ENCODE measurements at regions of chr9 and their contacts with region 1.

Region 1: GRCh38 chr9:72022841-72023240 is 37.6 kb downstream of the C9orf57 start:
- DNase-seq: no peak
- H3K4me3 ChIP-seq: no peak overlapping the region
- H3K27ac ChIP-seq: no peak overlapping the region
- H3K4me1 ChIP-seq: peaks cover 0 to 2% of the 10 kb centered on the region in 2 experiments; a peak in 1 of 4 replicates
- H3K27me3 ChIP-seq: no peaks in the 10 kb centered on the region; the same call in 1 of the 2 replicates
- CTCF ChIP-seq: no peak
- EP300 ChIP-seq: no peak
- RAD21 ChIP-seq: no peak

Region 2: DNA sequence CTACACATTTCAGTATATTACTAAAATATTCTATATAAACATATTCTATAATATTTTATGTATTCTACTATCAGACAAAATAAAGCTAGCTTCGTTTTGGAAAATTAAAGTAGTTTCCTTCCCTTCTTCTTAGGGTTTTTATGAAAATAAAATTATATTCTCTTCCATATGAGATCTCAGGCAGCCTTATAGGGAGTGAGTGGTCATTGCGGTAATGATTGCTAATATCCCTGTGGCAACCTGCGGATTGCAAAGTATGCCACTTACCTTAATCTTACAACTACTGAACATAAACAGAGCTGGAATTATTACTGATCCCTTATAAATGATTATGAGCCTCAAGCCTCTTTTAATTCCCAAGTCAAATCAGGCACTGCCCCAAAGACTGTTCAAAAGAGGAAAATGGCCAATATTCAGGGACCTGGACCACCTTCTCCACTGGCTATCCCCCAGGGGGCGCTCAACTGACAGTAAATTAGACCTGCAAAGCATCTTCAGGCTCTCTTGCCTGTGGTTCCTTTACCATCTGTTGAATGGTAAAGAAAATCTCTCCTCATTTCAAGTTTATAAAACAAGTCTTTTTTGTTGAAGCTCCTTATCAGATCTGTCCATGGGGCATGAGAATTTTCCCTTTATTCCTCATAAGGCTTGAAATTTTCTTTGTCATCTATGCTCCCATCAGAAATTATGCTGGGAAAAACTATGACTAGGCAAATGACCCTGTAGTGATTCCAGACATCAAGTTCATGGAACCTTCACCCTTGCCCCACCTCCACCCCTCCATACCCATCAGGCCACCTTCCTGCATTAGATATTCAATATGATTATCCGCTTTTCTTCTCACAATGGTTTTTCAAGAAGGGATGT is 418.4 kb before region 1 on chr9:
- CTCF ChIA-PET with region 1: interaction called, 17 read pairs
- POLR2A ChIA-PET with region 1: no interaction called
- DNase-seq: peak; percentile 33
- H3K4me3 ChIP-seq: peak overlapping the region in 1 of 2 experiments; percentile 33; a peak in 1 of 4 replicates
- H3K27ac ChIP-seq: no peak overlapping the region
- H3K4me1 ChIP-seq: no peaks in the 10 kb centered on the region
- H3K27me3 ChIP-seq: peaks cover 7% of the 10 kb centered on the region; the same call in 1 of the 2 replicates
- CTCF ChIP-seq: peak; percentile 86
- EP300 ChIP-seq: no peak
- RAD21 ChIP-seq: peak; percentile 67

Region 3: GRCh38 chr9:71806901-71807307 is 215.9 kb before region 1 on chr9:
- CTCF ChIA-PET with region 1: interaction called, 149 read pairs
- POLR2A ChIA-PET with region 1: no interaction called
- DNase-seq: peak; percentile 54
- H3K4me3 ChIP-seq: peak overlapping the region in 1 of 2 experiments; percentile 38; a peak in 1 of 4 replicates
- H3K27ac ChIP-seq: no peak overlapping the region
- H3K4me1 ChIP-seq: no peaks in the 10 kb centered on the region
- H3K27me3 ChIP-seq: peaks cover 32% of the 10 kb centered on the region; the same call in 1 of the 2 replicates
- CTCF ChIP-seq: peak; percentile 84
- EP300 ChIP-seq: no peak
- RAD21 ChIP-seq: peak; percentile 87

Region 4: GRCh38 chr9:71819115-71819739 is 203.6 kb before region 1 on chr9:
- CTCF ChIA-PET with region 1: interaction called, 39 read pairs
- POLR2A ChIA-PET with region 1: no interaction called
- DNase-seq: peak; percentile 13
- H3K4me3 ChIP-seq: no peak overlapping the region
- H3K27ac ChIP-seq: no peak overlapping the region
- H3K4me1 ChIP-seq: no peaks in the 10 kb centered on the region; a peak in 1 of 4 replicates
- H3K27me3 ChIP-seq: no peaks in the 10 kb centered on the region
- CTCF ChIP-seq: peak; percentile 93
- EP300 ChIP-seq: no peak
- RAD21 ChIP-seq: peak; percentile 60

Region 5: DNA sequence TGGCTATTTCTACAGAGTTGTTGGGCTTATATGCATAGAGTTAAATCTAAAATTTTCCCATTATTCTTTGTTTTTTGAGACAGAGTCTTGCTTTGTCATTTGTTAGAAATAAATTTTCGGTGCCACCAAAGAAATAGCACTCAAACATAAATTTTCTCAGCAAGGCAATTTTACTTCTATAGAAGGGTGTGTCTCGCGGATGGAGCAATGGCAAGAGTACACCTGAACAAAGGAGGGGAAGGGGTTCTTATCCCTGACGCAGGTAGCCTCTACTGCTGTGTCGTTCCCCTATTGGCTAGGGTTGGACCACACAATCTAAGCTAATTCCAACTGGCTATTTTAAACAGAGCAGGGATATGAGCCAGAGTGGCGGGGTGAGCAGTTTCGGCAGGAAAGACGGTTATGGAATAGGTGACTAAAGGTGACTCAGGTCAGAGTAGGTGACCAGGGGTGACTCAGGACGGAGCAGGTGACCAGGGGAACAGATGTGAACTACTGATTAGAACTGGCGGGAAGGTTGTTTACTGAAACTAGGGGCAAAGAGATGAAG is 54.2 kb before region 1 on chr9:
- CTCF ChIA-PET with region 1: no interaction called
- POLR2A ChIA-PET with region 1: no interaction called
- DNase-seq: no peak
- H3K4me3 ChIP-seq: no peak overlapping the region
- H3K27ac ChIP-seq: no peak overlapping the region
- H3K4me1 ChIP-seq: no peaks in the 10 kb centered on the region
- H3K27me3 ChIP-seq: no peaks in the 10 kb centered on the region
- CTCF ChIP-seq: no peak
- EP300 ChIP-seq: no peak
- RAD21 ChIP-seq: no peak

Region 6: DNA sequence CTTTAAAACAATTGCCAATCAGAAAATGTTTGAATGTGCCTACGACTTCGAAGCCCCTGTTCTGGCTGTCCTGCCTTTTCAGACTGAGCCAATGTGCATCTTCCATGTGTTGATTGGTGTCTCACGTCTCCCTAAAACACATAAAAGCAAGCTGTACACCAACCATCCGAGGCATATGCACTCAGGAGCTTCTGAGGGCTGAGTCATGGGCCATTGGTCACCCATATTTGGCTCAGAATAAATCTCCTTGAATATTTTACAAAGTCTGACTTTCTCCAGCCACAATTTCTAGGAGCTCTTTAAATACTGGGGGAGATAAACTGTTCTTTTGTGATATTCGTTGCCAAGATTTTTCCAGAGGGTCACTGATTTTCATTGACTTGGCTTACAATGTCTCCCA is 16.3 kb before region 1 on chr9:
- CTCF ChIA-PET with region 1: interaction called, 12 read pairs
- POLR2A ChIA-PET with region 1: interaction called, 3 read pairs
- DNase-seq: no peak
- H3K4me3 ChIP-seq: no peak overlapping the region
- H3K27ac ChIP-seq: no peak overlapping the region
- H3K4me1 ChIP-seq: no peaks in the 10 kb centered on the region
- H3K27me3 ChIP-seq: no peaks in the 10 kb centered on the region
- CTCF ChIP-seq: no peak
- EP300 ChIP-seq: no peak
- RAD21 ChIP-seq: no peak

Region 7: DNA sequence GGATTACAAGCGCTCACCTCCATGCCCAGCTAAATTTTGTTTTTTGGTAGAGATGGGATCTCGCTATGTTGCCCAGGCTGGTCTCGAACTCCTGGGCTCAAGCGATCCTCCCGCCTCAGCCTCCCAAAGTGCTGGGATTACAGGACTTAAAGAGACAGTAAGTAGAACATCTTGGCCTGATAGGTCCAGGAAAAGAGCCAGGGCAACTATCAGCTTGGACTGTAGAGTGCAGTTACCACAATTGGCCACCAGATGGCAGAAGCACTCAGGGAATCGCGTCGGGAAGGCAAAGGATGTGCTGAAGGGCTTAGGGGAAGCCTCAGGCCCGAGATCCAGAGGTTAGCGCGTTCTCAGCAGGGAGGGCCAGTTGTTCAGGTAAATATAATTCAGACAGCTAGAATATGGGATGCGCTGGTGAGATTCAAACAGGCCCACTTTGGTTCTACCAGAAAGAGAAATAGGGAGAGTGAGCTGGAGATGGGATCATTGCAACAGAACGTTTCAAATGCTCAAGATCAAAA is 16.1 kb after region 1 on chr9:
- CTCF ChIA-PET with region 1: interaction called, 60 read pairs
- POLR2A ChIA-PET with region 1: interaction called, 3 read pairs
- DNase-seq: peak; percentile 73
- H3K4me3 ChIP-seq: no peak overlapping the region; a peak in 1 of 4 replicates
- H3K27ac ChIP-seq: no peak overlapping the region
- H3K4me1 ChIP-seq: no peaks in the 10 kb centered on the region; a peak in 1 of 4 replicates
- H3K27me3 ChIP-seq: peaks cover 15% of the 10 kb centered on the region
- CTCF ChIP-seq: peak; percentile 89
- EP300 ChIP-seq: no peak
- RAD21 ChIP-seq: peak; percentile 91

Region 8: DNA sequence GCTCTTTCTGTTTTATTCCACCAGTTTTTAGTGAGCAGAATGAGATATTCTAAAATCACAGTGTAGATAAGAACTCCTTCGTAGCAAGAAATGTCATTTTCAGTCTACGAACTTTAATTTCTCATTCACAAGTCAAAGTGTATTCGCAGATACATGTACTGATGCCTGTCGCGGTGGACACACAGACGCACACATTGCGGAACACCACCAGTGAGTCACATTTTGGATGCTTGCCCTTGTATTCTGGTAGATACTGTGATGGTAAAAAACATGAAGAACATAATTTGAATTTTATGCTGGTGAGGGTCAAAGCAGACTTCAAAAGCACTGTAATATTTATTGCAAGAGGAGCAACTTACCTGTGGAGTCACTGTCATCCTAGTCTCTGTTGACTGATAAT is 42.2 kb after region 1 on chr9:
- CTCF ChIA-PET with region 1: interaction called, 12 read pairs
- POLR2A ChIA-PET with region 1: no interaction called
- DNase-seq: no peak
- H3K4me3 ChIP-seq: no peak overlapping the region
- H3K27ac ChIP-seq: no peak overlapping the region
- H3K4me1 ChIP-seq: no peaks in the 10 kb centered on the region
- H3K27me3 ChIP-seq: peaks cover 15% of the 10 kb centered on the region; the same call in 1 of the 2 replicates
- CTCF ChIP-seq: no peak
- EP300 ChIP-seq: no peak
- RAD21 ChIP-seq: no peak